ENCODE measurements at regions of chr3 and their contacts with region 1.

Region 1: DNA sequence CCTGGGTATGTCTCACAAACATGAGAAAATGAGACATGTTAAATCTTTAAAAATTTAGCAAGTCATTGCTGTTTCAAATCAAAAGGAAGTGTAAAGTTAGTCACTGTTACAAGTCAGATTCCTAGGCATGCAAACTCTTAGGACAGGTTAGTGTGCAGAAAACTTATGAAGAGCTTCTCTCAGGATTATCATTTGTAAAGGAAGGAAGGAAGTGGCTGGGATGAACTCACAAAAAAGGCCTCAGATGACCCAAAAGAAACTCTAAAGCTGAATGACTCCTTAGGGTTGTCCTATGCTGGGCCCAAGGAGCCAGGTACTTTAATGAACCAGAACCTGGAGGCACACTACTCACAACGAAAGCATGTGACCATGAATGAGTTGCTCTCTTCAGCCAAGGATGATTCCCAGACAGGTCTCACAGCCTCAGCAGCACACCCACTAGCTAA is 25.0 kb downstream of the MSL2 start:
- DNase-seq: no peak
- H3K4me3 ChIP-seq: no peak overlapping the region
- H3K27ac ChIP-seq: peak overlapping the region; percentile 39
- H3K27me3 ChIP-seq: no peaks in the 10 kb centered on the region
- CTCF ChIP-seq: no peak

Region 2: DNA sequence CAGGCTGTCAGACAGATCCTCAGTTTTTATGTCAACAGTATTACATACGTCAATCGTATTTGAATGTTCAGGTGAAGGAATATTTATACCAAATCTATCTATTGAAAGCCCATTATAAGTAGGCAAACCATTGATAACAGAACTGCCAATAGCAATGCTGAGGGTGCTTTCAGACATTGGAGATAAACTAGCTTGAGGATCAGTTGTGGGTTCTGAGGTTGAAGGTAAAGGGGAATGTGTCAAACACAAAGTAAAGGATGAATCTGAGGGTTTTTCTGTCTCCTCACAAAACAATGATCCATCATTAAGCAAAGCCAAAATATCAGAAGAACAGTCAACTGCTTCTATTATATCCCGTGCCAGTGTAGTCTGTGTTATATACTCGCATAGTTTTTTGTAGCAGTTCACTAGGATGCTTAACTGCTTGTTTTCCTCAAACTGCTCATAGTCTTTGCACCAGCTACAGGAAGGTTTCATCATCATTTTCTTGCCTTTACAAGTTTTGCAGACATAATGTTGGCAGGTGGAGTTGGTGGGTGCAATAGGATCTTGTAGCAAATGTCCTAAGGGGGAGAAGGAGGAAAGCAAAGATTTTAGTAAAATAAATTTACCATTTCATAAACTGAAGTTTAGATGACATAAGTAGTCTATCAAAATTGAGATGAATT is 18.8 kb before region 1 on chr3:
- CTCF ChIA-PET with region 1: interaction called, 14 read pairs
- POLR2A ChIA-PET with region 1: no interaction called
- DNase-seq: no peak
- H3K4me3 ChIP-seq: no peak overlapping the region
- H3K27ac ChIP-seq: no peak overlapping the region
- H3K27me3 ChIP-seq: no peaks in the 10 kb centered on the region
- CTCF ChIP-seq: no peak